Cardiac septum (tissue), 1 donor: ENCODE measurements at regions of chr15 and their contacts with region 1.

Region 1: DNA sequence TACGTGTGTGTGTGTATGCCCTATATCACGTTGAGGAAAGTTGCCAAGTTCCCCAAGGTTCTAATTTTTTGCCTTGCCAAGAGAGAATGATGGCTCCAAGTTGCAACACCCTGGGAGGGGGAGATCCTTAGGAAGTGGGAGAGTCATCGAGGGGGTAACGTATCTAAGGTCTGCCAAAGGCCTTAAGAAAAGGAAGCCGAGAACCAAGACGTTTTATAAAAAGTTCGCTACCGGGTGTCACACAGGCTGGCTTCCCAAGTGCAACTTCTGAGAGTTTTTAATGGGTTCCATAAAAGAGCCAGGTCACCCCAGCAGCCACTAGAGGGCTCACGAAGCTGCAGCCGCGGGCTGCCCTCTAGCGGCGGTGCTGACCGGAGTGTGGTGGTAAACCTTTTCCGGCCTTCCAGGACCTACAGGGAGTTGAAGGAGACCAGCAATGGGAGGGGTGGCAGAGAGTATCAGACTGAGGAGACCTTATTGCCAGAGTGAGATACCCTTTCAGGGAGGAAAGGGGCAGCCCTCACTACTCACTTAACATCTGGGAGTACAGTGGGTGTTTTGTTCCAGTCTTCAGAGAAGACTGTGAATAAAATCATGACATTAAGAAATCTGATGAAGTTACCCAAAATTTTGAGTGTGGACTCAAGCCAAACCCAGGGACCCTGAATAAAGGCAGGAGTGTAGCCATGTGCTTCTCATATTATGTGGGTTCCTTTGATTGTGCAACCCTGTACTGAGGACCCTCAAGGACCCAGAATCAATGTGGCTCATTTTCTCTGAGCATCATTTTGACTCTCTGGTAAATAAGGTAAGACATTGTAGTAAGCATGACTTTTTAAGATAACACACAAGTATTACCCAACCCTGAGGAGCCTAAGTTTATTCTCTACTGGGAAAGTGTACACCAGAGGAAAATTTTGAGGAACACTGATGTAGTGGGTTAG is 2.5 kb upstream of the RFX7 start:
- DNase-seq: peak; percentile 94

Region 2: DNA sequence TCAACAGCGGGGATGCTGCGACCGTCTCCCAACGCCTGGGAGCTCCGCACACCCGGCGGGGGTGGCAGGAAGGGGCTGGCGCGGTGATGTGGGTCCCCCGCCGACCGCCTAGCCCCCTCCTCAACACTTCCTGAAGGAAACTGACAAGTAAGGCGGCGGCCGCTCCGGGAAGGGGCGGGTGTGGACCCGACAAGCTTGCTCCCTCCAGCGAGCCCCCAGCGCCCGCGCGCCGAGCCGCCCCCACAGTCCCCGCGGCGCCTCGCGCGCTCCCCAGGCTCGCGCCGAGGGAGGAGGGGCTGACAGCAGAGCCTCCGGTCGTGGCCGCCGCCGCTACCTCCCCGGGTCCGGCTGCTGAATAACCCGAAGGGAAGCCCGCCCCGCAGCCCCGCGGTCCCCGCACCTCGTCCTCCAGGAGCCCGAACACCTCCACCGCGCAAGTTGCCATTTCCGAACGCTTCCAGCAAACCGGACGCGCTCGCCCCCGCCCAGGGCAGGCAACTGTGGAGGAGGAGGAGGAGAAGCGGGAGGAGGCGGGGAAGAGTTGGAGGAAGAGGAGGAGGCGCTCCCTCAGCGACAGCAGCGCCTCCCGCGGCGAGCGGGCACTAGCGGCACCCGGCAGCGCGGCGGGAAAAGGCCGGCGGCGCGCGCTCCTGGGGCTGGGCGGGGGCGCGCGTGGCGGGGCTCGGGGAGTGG is 252.9 kb before region 1 on chr15 and contains the start of gene NEDD4:
- intact Hi-C with region 1: loop called (anchors 5 kb)
- DNase-seq: peak; percentile 94
- total RNA-seq, gene NEDD4: 10.5 TPM

Region 3: GRCh38 chr15:56102441-56102840 is 143.7 kb before region 1 on chr15:
- intact Hi-C with region 1: loop called (anchors 10 kb)
- DNase-seq: no peak

Region 4: GRCh38 chr15:56207092-56207491 is 39.1 kb before region 1 on chr15:
- intact Hi-C with region 1: loop called (anchors 5 kb)
- DNase-seq: no peak

Region 5: GRCh38 chr15:56365075-56365711 is 119.0 kb after region 1 on chr15 and contains the start of gene TEX9:
- intact Hi-C with region 1: loop called (anchors 5 kb)
- DNase-seq: peak; percentile 89
- total RNA-seq, gene TEX9: 2.0 TPM

Region 6: DNA sequence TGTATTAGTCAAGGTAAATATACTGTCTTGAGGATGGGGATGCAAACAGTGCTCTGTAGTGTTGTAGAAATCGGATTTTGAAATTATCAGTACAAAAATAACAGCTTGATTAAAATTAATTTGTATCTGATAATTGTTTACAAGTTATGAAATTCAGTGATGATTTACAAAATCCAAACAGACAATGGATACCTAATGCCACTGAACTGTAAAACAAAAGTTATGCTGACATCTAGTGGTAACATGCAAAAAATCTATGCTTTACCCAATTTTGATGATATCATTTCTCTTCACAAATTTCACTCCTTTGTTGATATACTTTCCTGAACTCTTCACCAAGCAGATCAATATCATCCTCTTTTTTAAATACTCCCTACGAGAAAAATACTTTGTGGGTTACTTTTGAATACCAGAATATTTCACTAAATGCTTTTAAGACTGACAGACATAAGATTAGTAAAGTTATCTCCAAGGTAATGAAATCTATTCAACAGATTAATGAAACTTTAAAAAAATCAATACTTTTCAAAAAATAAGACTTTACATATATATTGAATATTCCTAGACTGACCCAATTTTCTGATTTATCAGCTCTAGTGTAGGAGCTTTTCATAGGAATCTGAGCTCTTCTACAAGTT is 182.8 kb after region 1 on chr15:
- intact Hi-C with region 1: loop called (anchors 2 kb)
- DNase-seq: no peak

Region 7: DNA sequence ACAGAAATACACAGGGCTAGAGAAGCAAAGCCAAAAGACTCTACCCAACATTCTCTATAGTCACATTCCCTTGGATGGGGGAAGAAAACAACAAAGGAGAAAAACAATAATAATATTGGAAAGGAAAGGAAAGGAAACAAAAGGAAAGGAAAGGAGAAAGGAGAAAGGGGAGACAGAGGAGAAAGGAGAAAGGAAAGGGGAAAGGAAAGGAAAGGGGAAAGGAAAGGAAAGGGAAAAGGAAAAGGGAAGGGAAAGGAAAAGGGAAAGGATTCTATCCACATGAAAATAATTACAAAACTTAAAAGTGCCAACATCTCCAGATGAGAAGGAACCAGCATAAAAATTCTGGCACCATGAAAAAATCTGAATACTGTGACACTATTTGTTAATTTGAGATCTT is 272.9 kb after region 1 on chr15:
- intact Hi-C with region 1: no loop called
- DNase-seq: no peak